ENCODE measurements at regions of chr7 and their contacts with region 1.

Region 1: DNA sequence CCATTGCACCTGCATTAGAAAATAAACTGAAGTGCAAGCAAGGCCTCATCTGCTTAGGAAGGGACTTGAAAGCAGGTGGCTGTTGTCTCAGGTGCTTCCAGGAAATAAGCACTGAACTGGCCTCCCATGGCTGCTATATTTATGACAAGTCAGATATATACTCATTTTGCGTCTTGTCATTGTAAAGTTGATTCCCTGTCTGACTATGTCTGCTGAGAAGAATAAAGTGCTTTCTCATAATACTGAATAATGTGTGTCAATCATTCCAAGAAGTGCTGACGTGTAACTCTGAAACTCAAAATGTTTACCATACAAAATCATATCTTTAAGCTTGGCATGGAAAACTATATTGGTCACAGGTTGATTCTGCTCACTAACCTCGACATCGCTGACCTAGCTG is 44.9 kb upstream of the SVOPL start:
- DNase-seq: peak; percentile 61
- ATAC-seq: peak; percentile 94
- H3K4me3 Mint-ChIP-seq: no peak overlapping the region
- H3K27ac Mint-ChIP-seq: no peak overlapping the region
- H3K4me1 Mint-ChIP-seq: peaks cover 29% of the 10 kb centered on the region
- H3K27me3 Mint-ChIP-seq: no peaks in the 10 kb centered on the region

Region 2: DNA sequence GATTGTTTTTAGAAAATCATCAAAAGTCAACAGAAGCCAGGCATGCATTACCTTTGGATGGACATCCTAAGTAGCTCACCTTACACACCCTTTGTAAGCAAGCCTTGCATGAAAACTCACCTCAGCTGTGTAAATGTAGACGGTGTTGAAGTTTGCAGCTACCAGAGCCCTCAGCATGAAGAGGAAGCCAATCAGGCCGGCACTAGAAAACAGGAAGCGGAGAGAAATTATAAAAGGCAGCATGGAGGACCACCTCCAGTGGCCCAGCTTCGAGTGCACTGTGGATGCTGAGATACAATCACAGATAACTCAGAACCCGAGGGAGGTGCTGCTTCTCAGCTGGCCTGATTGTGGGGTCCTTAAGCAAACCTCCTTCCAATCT is 120.2 kb before region 1 on chr7:
- CTCF ChIA-PET with region 1: no interaction called
- POLR2A ChIA-PET with region 1: no interaction called
- intact Hi-C with region 1: no loop called
- DNase-seq: peak; percentile 10
- ATAC-seq: peak; percentile 44
- H3K4me3 Mint-ChIP-seq: no peak overlapping the region
- H3K27ac Mint-ChIP-seq: peak overlapping the region; percentile 40
- H3K4me1 Mint-ChIP-seq: peaks cover 42% of the 10 kb centered on the region
- H3K27me3 Mint-ChIP-seq: no peaks in the 10 kb centered on the region

Region 3: DNA sequence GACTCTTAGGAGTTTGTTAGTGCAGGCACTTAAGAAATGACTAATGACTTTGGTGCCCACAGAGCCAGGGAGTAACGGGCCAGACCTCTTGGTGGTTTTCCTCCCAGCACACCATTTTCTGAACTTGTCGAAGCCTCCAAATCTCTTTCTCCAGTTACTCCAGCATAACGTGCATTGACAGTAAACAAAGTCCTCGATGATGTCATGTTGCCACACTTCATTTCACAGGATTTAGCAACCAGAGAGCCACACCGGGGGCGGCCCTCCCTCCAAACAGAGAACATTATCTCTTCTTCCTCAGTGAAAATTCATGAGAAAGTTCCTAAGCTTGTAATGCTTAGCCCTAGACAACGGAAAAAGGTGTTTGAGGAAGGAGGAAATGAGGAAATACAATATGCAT is 40.9 kb before region 1 on chr7:
- CTCF ChIA-PET with region 1: no interaction called
- POLR2A ChIA-PET with region 1: no interaction called
- intact Hi-C with region 1: loop called in 1 of 2 experiments (anchors 2 kb)
- DNase-seq: no peak
- ATAC-seq: no peak
- H3K4me3 Mint-ChIP-seq: no peak overlapping the region
- H3K27ac Mint-ChIP-seq: no peak overlapping the region
- H3K4me1 Mint-ChIP-seq: peaks cover 4% of the 10 kb centered on the region
- H3K27me3 Mint-ChIP-seq: peaks cover 2% of the 10 kb centered on the region

Region 4: DNA sequence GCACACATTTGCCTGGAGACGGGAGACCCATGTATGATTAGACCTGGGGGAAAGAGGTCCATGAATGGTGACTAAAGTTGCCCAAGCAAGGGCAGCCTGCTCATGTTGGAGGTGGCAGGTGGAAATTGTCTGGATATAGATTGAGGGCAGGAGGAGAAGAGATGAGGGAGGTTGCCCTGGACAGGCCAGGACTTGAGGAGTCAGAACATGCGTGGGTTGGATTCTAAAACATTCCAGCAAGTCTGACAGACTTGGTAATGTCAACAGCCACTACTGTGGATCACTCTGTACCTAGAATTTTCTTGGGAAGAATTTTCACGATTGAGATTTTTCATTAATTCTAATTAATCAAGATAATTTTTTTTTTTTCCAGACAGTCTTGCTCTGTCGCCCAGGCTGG is 25.8 kb before region 1 on chr7:
- CTCF ChIA-PET with region 1: no interaction called
- POLR2A ChIA-PET with region 1: no interaction called
- intact Hi-C with region 1: no loop called
- DNase-seq: no peak
- ATAC-seq: no peak
- H3K4me3 Mint-ChIP-seq: no peak overlapping the region
- H3K27ac Mint-ChIP-seq: no peak overlapping the region
- H3K4me1 Mint-ChIP-seq: peaks cover 8% of the 10 kb centered on the region
- H3K27me3 Mint-ChIP-seq: peaks cover 2% of the 10 kb centered on the region

Region 5: GRCh38 chr7:138875794-138876193 is 129.7 kb after region 1 on chr7:
- CTCF ChIA-PET with region 1: interaction called, 5 read pairs
- POLR2A ChIA-PET with region 1: no interaction called
- intact Hi-C with region 1: loop called in 1 of 2 experiments (anchors 1 kb)
- DNase-seq: peak; percentile 80
- ATAC-seq: peak; percentile 98
- H3K4me3 Mint-ChIP-seq: no peak overlapping the region
- H3K27ac Mint-ChIP-seq: no peak overlapping the region
- H3K4me1 Mint-ChIP-seq: peaks cover 22% of the 10 kb centered on the region
- H3K27me3 Mint-ChIP-seq: no peaks in the 10 kb centered on the region